Right lobe of liver (tissue), 6 donors: ENCODE measurements at regions of chr1 and their contacts with region 1.

Region 1: GRCh38 chr1:216221260-216221700 is 202.0 kb downstream of the USH2A start:
- DNase-seq: peak in 1 of 3 donors; percentile 60
- ATAC-seq: peak; percentile 90 to 99 (median 98)
- H3K4me3 ChIP-seq: peak overlapping the region in 2 of 3 donors; percentile 34 to 45
- H3K27ac ChIP-seq: no peak overlapping the region
- H3K4me1 ChIP-seq: peaks cover 0 to 6% (median 0%) of the 10 kb centered on the region in 4 donors
- H3K27me3 ChIP-seq: no peaks in the 10 kb centered on the region
- CTCF ChIP-seq: peak; percentile 53 to 76 (median 74)
- POLR2A ChIP-seq: no peak

Region 2: GRCh38 chr1:216020743-216021345 is 200.4 kb before region 1 on chr1:
- intact Hi-C with region 1: no loop called
- DNase-seq: no peak
- ATAC-seq: no peak
- H3K4me3 ChIP-seq: no peak overlapping the region
- H3K27ac ChIP-seq: no peak overlapping the region
- H3K4me1 ChIP-seq: no peaks in the 10 kb centered on the region
- H3K27me3 ChIP-seq: no peaks in the 10 kb centered on the region
- CTCF ChIP-seq: no peak
- POLR2A ChIP-seq: no peak

Region 3: DNA sequence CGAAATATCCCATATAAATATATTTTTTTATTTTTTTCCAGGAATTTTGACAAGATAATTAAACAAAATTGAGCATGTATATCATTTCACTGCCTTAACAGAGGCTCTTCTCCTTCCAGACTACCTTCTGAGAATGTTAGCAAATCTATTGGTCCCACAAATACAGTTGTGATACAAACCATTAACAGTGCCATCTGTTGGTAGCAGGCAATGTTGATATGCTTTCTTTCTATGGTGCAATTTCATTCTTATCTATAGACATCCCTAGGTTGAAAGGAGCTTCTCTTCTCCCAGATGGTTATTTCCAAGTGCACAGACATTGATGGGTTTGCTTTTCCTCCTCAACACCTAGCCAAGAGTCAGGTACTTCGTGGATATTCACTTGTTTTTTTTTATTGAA is 101.7 kb before region 1 on chr1:
- intact Hi-C with region 1: loop called in 1 of 2 experiments (anchors 10 kb)
- DNase-seq: no peak
- ATAC-seq: peak; percentile 83 to 85 (median 84)
- H3K4me3 ChIP-seq: no peak overlapping the region
- H3K27ac ChIP-seq: no peak overlapping the region
- H3K4me1 ChIP-seq: no peaks in the 10 kb centered on the region
- H3K27me3 ChIP-seq: no peaks in the 10 kb centered on the region
- CTCF ChIP-seq: peak; percentile 46 to 64 (median 56)
- POLR2A ChIP-seq: no peak

Region 4: DNA sequence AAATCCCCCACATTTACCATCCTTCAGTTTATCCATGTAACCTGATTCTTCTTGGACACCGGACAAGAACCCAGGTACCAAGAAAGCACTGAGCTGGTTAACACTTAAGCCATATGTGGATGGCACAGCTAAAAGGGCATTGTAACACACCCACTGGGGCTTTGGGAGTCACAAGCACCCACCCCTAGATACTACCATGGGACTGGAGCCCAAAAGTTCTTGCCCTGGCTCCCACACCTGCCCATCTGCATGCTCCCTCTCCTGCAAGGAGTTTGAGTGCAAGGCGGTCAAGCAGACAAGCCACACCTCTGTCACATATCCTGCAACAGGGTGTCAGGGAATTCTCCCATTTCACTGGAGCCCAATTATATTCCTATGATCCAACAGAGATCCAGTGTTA is 68.2 kb before region 1 on chr1:
- intact Hi-C with region 1: no loop called
- DNase-seq: no peak
- ATAC-seq: no peak
- H3K4me3 ChIP-seq: no peak overlapping the region
- H3K27ac ChIP-seq: no peak overlapping the region
- H3K4me1 ChIP-seq: no peaks in the 10 kb centered on the region
- H3K27me3 ChIP-seq: no peaks in the 10 kb centered on the region
- CTCF ChIP-seq: no peak
- POLR2A ChIP-seq: no peak

Region 5: DNA sequence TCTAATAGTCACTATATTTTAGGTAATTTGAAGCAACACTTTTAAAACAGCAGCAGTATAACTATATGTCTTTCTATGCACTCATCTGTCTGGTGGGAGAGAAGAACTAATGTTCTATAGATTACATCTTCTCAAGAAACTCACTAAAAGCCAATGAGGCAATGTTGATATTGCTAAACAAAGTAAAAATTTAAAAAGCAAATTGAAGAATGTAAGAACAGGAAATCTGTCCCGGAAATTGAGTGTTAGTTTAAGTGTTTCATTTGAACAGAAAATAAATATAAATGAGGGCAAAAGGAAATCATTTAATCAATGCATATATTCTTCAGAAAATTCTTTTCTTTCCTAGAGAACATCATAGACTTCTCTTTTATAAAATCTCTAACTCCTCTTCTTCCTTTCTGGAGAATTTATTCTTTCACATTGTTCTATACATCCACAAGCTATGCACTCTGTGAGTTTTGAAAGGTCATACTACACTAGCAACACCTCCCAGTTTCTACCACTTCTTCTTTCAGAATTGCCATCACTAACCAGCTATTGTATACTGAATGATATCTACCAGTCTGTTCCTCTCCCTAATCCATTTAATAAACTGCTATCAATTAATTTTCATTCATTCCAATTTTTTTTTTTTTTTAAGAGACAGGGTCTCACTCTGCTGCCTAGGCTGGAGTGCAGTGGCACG is 49.0 kb after region 1 on chr1:
- intact Hi-C with region 1: no loop called
- DNase-seq: no peak
- ATAC-seq: no peak
- H3K4me3 ChIP-seq: no peak overlapping the region
- H3K27ac ChIP-seq: no peak overlapping the region
- H3K4me1 ChIP-seq: no peaks in the 10 kb centered on the region
- H3K27me3 ChIP-seq: no peaks in the 10 kb centered on the region
- CTCF ChIP-seq: no peak
- POLR2A ChIP-seq: no peak